ENCODE measurements at regions of chr11 and their contacts with region 1.

Region 1: DNA sequence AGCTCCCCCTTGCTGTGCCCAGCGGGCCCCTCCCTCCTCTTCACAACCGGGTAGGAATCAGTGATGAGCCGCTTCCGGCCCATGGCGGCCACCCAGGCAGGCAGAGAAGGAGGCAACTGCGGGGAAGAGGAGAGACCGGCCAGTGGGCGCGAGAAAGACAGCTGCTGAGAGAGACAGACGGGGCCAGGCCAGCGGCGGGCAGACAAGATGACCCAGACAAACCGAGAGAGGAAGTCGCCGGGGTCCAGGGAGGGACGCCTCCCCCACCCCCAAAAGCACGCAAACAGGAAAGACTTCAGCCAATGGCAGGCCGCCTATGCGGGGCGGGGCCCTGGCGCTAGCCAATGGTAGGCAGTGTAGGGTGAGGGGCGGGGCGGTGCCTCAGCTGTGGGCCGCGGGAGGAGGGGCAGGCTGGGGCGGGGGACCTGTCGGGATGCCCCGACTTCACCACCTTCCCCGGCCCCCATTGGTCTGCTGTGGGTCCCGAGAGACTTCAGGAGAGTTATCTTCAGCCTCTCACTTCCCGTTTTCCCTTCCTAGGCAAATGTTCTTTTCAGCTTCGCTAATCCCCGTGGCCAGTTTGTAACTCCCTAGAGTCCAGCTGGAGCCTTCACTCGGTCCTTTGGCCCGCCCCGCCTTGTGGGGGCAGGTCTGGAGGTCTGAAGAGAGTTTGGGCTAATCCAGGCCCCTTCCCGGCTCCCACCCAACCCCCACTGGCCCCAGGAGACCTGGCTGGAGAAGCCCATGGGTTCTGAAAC is at the start of gene POLD4:
- DNase-seq: peak; percentile 97 to 99 (median 99)

Region 2: GRCh38 chr11:67248653-67249052 is 104.8 kb before region 1 on chr11:
- intact Hi-C with region 1: no loop called
- DNase-seq: no peak

Region 3: GRCh38 chr11:67379061-67380058 is 25.9 kb after region 1 on chr11:
- intact Hi-C with region 1: loop called (anchors 2 kb)
- DNase-seq: no peak

Region 4: GRCh38 chr11:67391304-67392132 is 38.0 kb after region 1 on chr11 and contains the start of gene RAD9A:
- intact Hi-C with region 1: loop called (anchors 5 kb)
- DNase-seq: peak; percentile 92 to 99 (median 96)

Region 5: GRCh38 chr11:67780056-67780455 is 426.6 kb after region 1 on chr11:
- intact Hi-C with region 1: no loop called
- DNase-seq: no peak